Dorsolateral prefrontal cortex (tissue), 120 donors: ENCODE measurements at regions of chr18 and their contacts with region 1.

Region 1: GRCh38 chr18:55781481-55781957 is 193.5 kb upstream of the TCF4 start:
- DNase-seq: peak; percentile 42 to 83 (median 65)
- H3K4me3 ChIP-seq: peak overlapping the region in 6 of 59 donors; percentile 8 to 83 (median 15)
- H3K27ac ChIP-seq: peak overlapping the region in 57 of 59 donors; percentile 7 to 96 (median 92)
- H3K27me3 ChIP-seq: no peaks in the 10 kb centered on the region
- CTCF ChIP-seq: peak; percentile 51 to 90 (median 78)

Region 2: GRCh38 chr18:55096261-55096951 is 685.1 kb before region 1 on chr18:
- intact Hi-C with region 1: loop called in 1 of 2 experiments (anchors 5 kb)
- DNase-seq: peak; percentile 35 to 72 (median 59)
- H3K4me3 ChIP-seq: no peak overlapping the region
- H3K27ac ChIP-seq: peak overlapping the region in 1 of 59 donors; percentile 28
- H3K27me3 ChIP-seq: no peaks in the 10 kb centered on the region
- CTCF ChIP-seq: peak in 53 of 56 donors; percentile 17 to 70 (median 55)

Region 3: DNA sequence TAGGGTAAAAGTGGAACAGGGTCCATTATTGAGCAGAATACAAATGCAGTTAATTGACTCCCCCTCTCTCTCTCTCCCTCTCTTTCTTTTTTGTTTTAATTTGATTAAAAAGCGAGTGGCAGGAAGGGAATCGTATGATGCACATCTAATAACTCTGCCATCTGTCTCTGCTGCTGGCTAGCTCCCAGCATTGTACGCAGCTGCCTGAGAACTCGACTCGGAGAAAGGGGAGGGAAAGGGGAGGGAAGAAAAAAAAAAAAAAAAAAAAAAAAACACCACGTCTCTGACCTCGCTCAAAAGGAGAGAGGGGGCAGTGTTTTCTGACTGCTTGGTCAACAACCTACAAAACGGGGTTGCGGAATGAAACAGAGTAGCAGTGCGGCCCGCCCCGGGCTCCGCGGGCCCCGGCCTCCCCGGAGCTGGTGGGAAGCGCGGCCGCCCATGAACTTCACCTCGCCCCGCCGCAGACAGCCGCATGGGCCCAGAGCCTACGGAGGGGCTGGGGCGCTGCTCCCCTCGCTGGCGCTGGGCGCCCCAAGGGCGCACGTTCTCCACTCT is 459.3 kb before region 1 on chr18:
- intact Hi-C with region 1: loop called in 1 of 2 experiments (anchors 5 kb)
- DNase-seq: peak; percentile 65 to 88 (median 84)
- H3K4me3 ChIP-seq: peak overlapping the region; percentile 47 to 86 (median 75)
- H3K27ac ChIP-seq: peak overlapping the region; percentile 88 to 100 (median 99)
- H3K27me3 ChIP-seq: no peaks in the 10 kb centered on the region
- CTCF ChIP-seq: peak in 43 of 56 donors; percentile 6 to 57 (median 29)

Region 4: DNA sequence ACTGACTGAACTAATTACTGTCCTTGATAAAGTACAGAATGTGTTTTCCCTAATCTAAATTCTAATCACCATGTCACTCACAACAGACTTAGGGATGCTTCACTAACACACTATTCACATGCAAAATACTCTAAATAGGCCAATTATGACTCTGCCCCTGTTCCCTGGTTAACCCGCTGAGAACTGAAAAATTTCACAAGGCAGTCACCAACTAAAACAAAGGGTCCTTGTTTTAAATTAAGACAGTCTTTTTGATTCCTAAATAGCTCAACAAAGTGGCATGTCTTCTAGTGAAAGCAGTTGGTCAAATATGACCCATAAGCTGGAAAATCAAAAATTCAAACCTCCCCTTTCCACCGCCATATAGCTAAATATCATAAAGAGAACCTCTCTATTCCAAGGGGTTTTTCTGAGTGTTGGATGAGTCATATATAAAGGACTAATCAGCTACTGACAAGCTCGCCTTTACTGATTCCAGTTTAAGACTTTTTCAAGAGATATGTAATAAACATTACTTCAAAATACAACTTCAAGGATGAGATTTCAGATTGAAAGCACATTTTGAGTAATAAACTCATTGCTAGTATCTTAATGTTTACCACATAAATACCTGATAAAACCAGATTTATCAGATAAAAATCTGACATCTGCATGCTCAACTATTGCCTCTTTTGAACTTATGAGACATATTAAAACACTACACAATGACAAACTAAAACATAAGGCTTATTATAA is 429.4 kb before region 1 on chr18:
- intact Hi-C with region 1: loop called in 1 of 2 experiments (anchors 10 kb)
- DNase-seq: no peak
- H3K4me3 ChIP-seq: peak overlapping the region in 55 of 59 donors; percentile 1 to 62 (median 37)
- H3K27ac ChIP-seq: peak overlapping the region; percentile 66 to 100 (median 95)
- H3K27me3 ChIP-seq: no peaks in the 10 kb centered on the region
- CTCF ChIP-seq: no peak

Region 5: DNA sequence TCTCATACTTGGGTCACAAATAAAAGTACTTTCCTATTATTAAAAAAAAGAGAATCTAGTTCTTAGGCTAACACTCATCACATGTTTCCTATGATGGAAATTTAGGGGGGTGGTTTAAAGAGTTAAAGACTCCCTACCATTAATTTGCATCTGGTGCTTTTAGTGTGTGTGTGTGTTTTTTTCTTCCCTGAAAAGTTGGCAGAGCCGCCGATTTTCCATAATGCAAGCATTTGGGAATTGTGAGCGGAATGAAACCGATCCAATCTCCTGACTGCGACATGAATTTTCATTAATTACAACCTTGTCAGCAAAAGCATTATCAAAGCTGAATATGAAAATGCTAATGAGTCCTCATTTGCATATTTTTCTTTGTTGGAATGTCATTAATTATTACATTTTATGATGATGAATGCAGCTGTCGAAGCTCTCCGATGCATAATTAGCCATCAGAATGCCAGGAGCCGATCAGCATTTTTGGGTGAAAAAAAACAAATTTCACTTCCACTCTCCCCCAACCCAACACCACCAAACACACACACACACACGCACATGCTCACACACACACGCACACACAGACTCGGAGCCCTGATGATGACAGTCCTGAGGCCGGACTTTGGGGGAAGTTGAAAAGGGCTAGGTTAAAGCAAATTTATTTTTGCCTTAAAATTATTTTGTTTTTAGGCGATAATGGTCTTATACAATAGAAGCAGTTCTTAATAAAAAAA is 358.9 kb before region 1 on chr18:
- intact Hi-C with region 1: loop called in 1 of 2 experiments (anchors 5 kb)
- DNase-seq: peak in 2 of 10 donors; percentile 39 to 52
- H3K4me3 ChIP-seq: peak overlapping the region; percentile 34 to 76 (median 59)
- H3K27ac ChIP-seq: peak overlapping the region; percentile 68 to 99 (median 93)
- H3K27me3 ChIP-seq: no peaks in the 10 kb centered on the region
- CTCF ChIP-seq: no peak

Region 6: GRCh38 chr18:55856229-55856628 is 74.7 kb after region 1 on chr18:
- intact Hi-C with region 1: loop called (anchors 5 kb)
- DNase-seq: no peak
- H3K4me3 ChIP-seq: no peak overlapping the region
- H3K27ac ChIP-seq: no peak overlapping the region
- H3K27me3 ChIP-seq: no peaks in the 10 kb centered on the region
- CTCF ChIP-seq: no peak

Region 7: GRCh38 chr18:56043671-56044070 is 262.2 kb after region 1 on chr18:
- intact Hi-C with region 1: loop called in 1 of 2 experiments (anchors 5 kb)
- DNase-seq: peak; percentile 24 to 98 (median 90)
- H3K4me3 ChIP-seq: peak overlapping the region in 6 of 59 donors; percentile 2 to 33 (median 20)
- H3K27ac ChIP-seq: peak overlapping the region; percentile 66 to 98 (median 94)
- H3K27me3 ChIP-seq: no peaks in the 10 kb centered on the region
- CTCF ChIP-seq: peak in 4 of 56 donors; percentile 6 to 10 (median 6)